ENCODE measurements at regions of chr9 and their contacts with region 1.

Region 1: GRCh38 chr9:71213633-71214032 is 92.2 kb upstream of the TRPM3 start:
- DNase-seq: no peak
- ATAC-seq: no peak
- H3K4me3 ChIP-seq: no peak overlapping the region
- H3K4me3 Mint-ChIP-seq: no peak overlapping the region
- H3K27ac ChIP-seq: no peak overlapping the region
- H3K27ac Mint-ChIP-seq: no peak overlapping the region
- H3K4me1 ChIP-seq: no peaks in the 10 kb centered on the region
- H3K4me1 Mint-ChIP-seq: no peaks in the 10 kb centered on the region
- H3K27me3 ChIP-seq: no peaks in the 10 kb centered on the region
- H3K27me3 Mint-ChIP-seq: peaks cover 0 to 3% of the 10 kb centered on the region in 2 donors

Region 2: DNA sequence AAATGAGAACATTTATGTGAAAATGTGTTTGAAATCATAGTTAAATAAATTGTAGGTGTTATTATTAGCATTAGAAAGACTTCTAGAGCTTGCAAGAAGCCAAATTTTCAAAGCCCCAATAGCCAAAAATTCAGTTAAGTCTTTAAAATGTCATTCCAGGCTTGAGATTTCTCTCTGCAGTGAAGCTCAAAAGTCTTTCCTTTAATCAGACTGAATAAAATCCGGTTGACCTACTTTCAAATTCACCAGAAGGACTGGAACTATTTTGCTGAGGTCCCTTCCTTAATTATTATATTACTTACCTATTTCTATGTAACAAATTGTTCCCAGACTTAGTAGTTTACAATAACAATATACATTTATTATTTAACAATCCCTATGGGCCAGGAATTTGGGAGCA is 20.0 kb after region 1 on chr9:
- CTCF ChIA-PET with region 1: interaction called in 1 of 2 experiments, 10 read pairs
- POLR2A ChIA-PET with region 1: no interaction called
- DNase-seq: no peak
- ATAC-seq: no peak
- H3K4me3 ChIP-seq: no peak overlapping the region
- H3K4me3 Mint-ChIP-seq: no peak overlapping the region
- H3K27ac ChIP-seq: no peak overlapping the region
- H3K27ac Mint-ChIP-seq: no peak overlapping the region
- H3K4me1 ChIP-seq: no peaks in the 10 kb centered on the region
- H3K4me1 Mint-ChIP-seq: no peaks in the 10 kb centered on the region
- H3K27me3 ChIP-seq: no peaks in the 10 kb centered on the region
- H3K27me3 Mint-ChIP-seq: no peaks in the 10 kb centered on the region